ENCODE measurements at regions of chr7 and their contacts with region 1.

Region 1: DNA sequence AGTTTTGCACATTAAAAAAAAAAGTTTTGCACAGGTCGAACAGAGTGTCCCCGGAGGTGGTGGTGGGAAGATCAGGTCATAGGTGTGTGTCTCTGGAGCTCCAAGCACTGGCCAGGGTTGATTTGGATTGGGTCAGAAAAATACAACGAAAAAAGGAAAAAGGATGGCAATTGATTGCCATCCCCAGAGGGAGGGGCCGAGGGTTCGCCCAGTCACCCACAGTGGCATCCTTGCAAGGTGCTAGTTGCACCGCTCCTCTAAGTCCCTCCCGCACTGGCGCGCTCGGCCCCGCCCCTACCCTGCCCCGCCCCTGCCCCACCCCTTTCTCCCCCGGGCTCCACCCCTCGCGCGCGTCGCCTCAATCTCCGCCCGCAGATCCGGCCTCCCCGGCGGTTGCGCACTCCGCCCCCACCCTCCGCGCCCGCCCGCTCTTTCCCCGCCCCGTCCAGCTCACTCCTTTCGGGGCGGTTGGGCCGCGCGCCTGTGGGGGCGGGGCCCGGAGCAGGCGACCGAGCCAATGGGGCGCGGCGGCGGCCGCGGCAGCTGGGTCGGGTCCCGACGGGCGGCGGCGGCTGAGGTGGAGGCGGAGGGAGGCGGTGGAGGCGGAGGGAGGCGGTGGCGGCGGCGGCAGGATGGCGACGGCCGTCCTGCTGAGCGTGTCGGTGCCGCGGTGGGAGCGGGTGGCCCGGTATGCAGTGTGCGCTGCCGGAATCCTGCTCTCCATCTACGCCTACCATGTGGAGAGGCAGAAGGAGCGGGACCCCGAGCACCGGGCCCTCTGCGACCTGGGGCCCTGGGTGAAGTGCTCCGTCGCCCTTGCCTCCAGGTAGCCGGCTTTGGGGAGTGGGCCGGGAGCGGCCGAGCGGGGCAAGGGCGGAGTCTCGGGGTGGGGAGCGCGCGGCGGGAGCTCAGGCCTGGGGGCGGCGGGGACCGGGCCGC is 31.5 kb upstream of the ERV3-1 start:
- DNase-seq: peak; percentile 85
- ATAC-seq: peak; percentile 91
- H3K4me3 Mint-ChIP-seq: peak overlapping the region; percentile 64
- H3K27ac Mint-ChIP-seq: no peak overlapping the region
- H3K4me1 Mint-ChIP-seq: peaks cover 19% of the 10 kb centered on the region
- H3K27me3 Mint-ChIP-seq: 0 out of 2 replicates have a peak, but pooled peaks cover 1% of the 10 kb centered on the region
- CTCF ChIP-seq: no peak

Region 2: GRCh38 chr7:65006094-65006992 is 31.7 kb before region 1 on chr7 and contains the start of gene ERV3-1:
- CTCF ChIA-PET with region 1: interaction called, 7 read pairs
- POLR2A ChIA-PET with region 1: interaction called, 15 read pairs
- DNase-seq: peak; percentile 86
- ATAC-seq: peak; percentile 99
- H3K4me3 Mint-ChIP-seq: peak within 1 kb of the TSS; percentile 93
- H3K27ac Mint-ChIP-seq: peak within 1 kb of the TSS; percentile 98
- H3K4me1 Mint-ChIP-seq: peaks cover 23% of the 10 kb centered on the region
- H3K27me3 Mint-ChIP-seq: no peaks in the 10 kb centered on the region; the same call in 1 of the 2 replicates
- CTCF ChIP-seq: no peak
- total RNA-seq, gene ERV3-1: 10.2 to 12.1 TPM (median 11.5 TPM) in 3 replicates

Measured in WTC11 (cell line).